WTC11 (cell line): ENCODE measurements at regions of chr4 and their contacts with region 1.

Region 1: GRCh38 chr4:164731827-164732474 is 22.0 kb upstream of the SMIM31 start:
- DNase-seq: peak; percentile 65
- ATAC-seq: peak; percentile 76
- H3K4me3 Mint-ChIP-seq: no peak overlapping the region
- H3K27ac Mint-ChIP-seq: no peak overlapping the region
- H3K4me1 Mint-ChIP-seq: no peaks in the 10 kb centered on the region
- H3K27me3 Mint-ChIP-seq: no peaks in the 10 kb centered on the region
- CTCF ChIP-seq: peak; percentile 85

Region 2: DNA sequence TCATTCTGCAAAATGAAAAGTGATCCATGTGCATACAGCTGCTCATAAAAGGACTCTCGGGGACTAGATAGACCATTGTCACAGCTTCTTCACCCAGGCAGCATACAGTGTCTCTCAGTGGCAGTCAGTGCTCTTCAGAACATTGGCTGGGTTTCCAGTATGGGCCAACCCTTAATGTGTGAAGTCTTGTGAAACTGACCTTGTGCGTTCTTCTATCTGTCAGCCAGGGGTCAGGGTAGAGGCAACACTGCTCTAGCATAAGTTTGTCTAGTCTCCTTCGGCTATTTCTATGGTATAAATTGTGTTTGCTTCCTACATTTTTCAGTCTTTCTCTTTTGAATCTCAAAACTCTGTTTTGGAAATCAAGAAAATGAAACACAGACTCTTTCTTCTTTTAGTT is 15.1 kb before region 1 on chr4:
- CTCF ChIA-PET with region 1: interaction called, 10 read pairs
- POLR2A ChIA-PET with region 1: interaction called, 3 read pairs
- DNase-seq: peak; percentile 26
- ATAC-seq: peak; percentile 98
- H3K4me3 Mint-ChIP-seq: no peak overlapping the region
- H3K27ac Mint-ChIP-seq: no peak overlapping the region
- H3K4me1 Mint-ChIP-seq: no peaks in the 10 kb centered on the region
- H3K27me3 Mint-ChIP-seq: no peaks in the 10 kb centered on the region
- CTCF ChIP-seq: 0 out of 2 replicates have a peak, but pooled peaks have one; percentile 26

Region 3: DNA sequence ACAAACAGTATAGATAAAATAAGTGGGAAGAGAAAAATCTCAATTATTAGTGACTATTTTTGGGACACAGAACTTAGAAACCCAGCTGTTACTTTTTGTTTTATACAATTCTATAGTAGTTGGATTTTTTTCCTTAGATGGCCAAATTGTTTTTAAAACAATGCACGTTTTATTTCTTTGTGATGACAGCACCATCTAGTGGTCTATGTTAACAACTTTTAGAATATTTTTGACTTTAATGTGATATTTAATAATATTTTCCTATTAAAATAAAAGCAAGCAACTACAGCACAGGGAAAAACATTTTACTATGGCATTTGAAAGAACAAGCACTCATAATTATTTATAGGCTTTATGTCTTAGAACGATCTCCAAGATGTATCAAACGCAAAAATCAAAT is 16.4 kb after region 1 on chr4:
- CTCF ChIA-PET with region 1: no interaction called
- POLR2A ChIA-PET with region 1: no interaction called
- DNase-seq: no peak
- ATAC-seq: no peak
- H3K4me3 Mint-ChIP-seq: no peak overlapping the region
- H3K27ac Mint-ChIP-seq: no peak overlapping the region
- H3K4me1 Mint-ChIP-seq: no peaks in the 10 kb centered on the region
- H3K27me3 Mint-ChIP-seq: no peaks in the 10 kb centered on the region; the same call in 1 of the 2 replicates
- CTCF ChIP-seq: peak; percentile 23